Activated CD8-positive, alpha-beta T cell treated with anti-CD3 and anti-CD28 coated beads for 36 hours (primary cell): ENCODE measurements at regions of chr11 and their contacts with region 1.

Region 1: GRCh38 chr11:114262681-114263512 is 33.3 kb upstream of the NNMT start:
- DNase-seq: peak; percentile 14
- ATAC-seq: peak; percentile 65
- H3K4me3 Mint-ChIP-seq: no peak overlapping the region
- H3K27ac Mint-ChIP-seq: no peak overlapping the region
- H3K4me1 Mint-ChIP-seq: no peaks in the 10 kb centered on the region
- H3K27me3 Mint-ChIP-seq: peaks cover 2% of the 10 kb centered on the region
- CTCF ChIP-seq: peak; percentile 48

Region 2: DNA sequence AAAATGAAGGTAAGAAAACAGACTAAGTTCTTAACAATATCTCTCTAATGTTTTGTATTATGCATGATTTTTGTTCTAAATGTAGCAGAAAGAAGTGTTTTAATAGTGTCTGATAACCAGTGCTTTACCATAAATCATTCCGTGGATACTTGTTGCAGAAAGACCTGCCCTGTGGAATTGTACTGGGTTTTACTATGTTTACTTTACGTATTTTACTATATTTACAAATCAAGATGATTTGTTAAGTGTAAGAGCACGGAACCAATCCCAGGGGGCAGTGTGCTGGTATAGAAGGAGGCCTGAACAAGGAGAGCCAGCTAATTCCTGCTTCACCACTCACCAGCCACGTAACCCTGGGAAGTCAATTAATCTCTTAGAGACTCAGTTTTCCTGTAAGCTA is 356.9 kb before region 1 on chr11:
- CTCF ChIA-PET with region 1: interaction called, 15 read pairs
- POLR2A ChIA-PET with region 1: no interaction called
- intact Hi-C with region 1: no loop called
- DNase-seq: no peak
- ATAC-seq: no peak
- H3K4me3 Mint-ChIP-seq: no peak overlapping the region
- H3K27ac Mint-ChIP-seq: no peak overlapping the region
- H3K4me1 Mint-ChIP-seq: no peaks in the 10 kb centered on the region
- H3K27me3 Mint-ChIP-seq: peaks cover 10% of the 10 kb centered on the region
- CTCF ChIP-seq: no peak

Region 3: DNA sequence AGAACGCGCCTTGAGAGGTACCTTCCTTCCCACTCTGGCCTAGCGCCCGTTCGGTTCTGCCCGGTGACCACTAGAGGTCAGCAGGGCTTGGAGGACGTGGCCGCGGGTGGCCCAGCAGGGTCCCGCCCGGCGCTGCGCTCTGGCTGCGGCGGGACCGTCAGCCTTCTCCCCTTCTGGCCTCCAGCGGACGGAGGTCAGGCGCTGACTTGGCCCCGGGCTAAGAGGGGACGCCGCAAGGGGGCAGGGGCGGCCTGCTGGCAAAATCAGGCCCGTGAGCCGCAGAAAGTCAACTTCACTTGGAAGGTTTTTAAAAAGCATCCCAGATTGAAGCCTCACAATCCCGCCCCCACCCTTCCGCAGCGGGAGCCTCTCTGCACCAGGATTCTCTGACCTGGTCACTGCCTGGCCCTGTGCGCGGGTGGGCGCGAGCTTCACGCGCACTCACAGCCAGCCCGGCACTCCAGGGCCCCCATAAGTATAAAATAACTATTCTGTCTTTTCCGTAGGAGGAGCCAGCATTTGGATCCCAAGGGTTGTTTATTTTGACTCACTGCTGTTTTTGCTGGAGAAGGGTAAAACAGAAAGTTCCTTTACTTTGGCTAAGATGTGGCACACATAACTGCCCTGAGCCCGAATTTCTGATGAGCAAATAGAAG is 226.6 kb before region 1 on chr11:
- CTCF ChIA-PET with region 1: interaction called, 210 read pairs
- POLR2A ChIA-PET with region 1: interaction called, 3 read pairs
- intact Hi-C with region 1: loop called (anchors 2 kb)
- DNase-seq: peak; percentile 58
- ATAC-seq: peak; percentile 91
- H3K4me3 Mint-ChIP-seq: no peak overlapping the region
- H3K27ac Mint-ChIP-seq: no peak overlapping the region
- H3K4me1 Mint-ChIP-seq: no peaks in the 10 kb centered on the region
- H3K27me3 Mint-ChIP-seq: no peaks in the 10 kb centered on the region
- CTCF ChIP-seq: peak; percentile 68

Region 4: DNA sequence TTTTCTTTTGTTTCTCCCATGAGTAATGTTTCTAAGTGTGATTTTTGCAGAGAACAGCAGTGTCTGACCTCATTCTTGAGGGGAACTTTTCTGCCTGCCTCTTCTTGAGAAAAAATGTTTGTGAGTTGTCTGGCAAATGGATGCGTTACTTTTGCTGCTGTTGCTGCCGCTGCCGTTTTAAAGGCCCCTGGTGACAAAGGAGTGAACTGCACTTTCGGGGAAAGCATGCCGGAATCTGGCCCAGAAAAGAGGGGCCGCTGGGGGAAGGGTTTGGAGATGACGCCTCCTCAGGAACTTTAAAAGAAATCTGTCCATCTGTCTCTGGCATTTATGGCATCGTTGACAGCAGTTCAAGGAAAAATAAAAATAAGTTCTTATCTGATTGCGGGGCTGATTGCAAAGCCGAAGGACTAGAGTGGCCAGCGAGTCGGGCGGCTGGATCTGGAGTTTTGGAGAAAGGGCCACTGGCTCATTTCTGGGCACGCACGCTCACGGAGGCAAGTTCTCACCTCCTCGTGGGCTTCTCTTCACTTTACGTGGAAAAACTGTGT is 186.9 kb before region 1 on chr11:
- CTCF ChIA-PET with region 1: interaction called, 13 read pairs
- POLR2A ChIA-PET with region 1: no interaction called
- intact Hi-C with region 1: no loop called
- DNase-seq: peak; percentile 54
- ATAC-seq: peak; percentile 22
- H3K4me3 Mint-ChIP-seq: peak overlapping the region; percentile 26
- H3K27ac Mint-ChIP-seq: peak overlapping the region; percentile 37
- H3K4me1 Mint-ChIP-seq: peaks cover 65% of the 10 kb centered on the region
- H3K27me3 Mint-ChIP-seq: no peaks in the 10 kb centered on the region
- CTCF ChIP-seq: peak; percentile 67

Region 5: DNA sequence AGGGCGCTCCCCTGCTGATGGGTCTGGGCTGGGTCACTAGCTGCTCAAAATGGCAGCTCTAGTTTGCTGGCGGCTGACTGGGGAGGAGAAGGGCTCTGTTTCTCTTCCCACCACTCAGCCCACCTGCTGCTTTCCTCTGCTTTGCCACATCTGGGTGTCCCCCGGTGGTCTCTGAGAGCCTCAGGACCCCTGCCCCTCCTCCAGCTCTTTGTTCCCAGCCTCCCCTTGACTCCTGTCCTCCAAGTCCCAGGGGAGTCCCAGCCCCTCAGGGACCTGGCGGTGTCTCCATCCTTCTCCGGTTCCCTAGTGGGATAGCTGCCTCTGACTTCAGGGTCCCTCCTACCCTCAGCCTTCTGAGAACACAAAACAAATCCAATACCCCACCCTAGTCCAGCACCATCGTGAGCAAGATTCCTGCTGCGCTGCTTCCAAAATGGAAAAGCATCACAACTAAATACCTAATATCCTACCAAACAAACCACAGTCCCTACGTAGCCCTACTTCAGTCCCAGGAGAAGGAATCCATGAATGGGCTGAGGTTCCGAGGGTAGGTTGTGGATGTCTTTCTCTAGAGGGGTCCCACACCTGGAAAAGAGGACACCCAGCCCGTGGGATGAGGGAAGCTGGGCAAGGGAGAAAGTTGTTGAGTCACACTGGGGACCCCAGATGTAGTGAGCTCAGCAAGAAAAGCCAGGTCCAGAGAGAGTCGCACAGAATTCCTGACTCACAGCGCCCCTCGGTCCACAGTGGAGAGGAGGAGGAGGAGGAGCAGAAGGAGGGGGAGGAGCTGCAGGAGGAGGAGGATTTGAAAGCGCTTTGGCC is 11.7 kb before region 1 on chr11:
- CTCF ChIA-PET with region 1: interaction called, 57 read pairs
- POLR2A ChIA-PET with region 1: no interaction called
- intact Hi-C with region 1: no loop called
- DNase-seq: no peak
- ATAC-seq: no peak
- H3K4me3 Mint-ChIP-seq: no peak overlapping the region
- H3K27ac Mint-ChIP-seq: no peak overlapping the region
- H3K4me1 Mint-ChIP-seq: no peaks in the 10 kb centered on the region
- H3K27me3 Mint-ChIP-seq: no peaks in the 10 kb centered on the region
- CTCF ChIP-seq: no peak

Region 6: GRCh38 chr11:114439229-114440120 is 176.6 kb after region 1 on chr11 and contains the start of gene REXO2:
- CTCF ChIA-PET with region 1: no interaction called
- POLR2A ChIA-PET with region 1: no interaction called
- intact Hi-C with region 1: no loop called
- DNase-seq: peak; percentile 96
- ATAC-seq: peak; percentile 97
- H3K4me3 Mint-ChIP-seq: peak within 1 kb of the TSS; percentile 96
- H3K27ac Mint-ChIP-seq: peak within 1 kb of the TSS; percentile 93
- H3K4me1 Mint-ChIP-seq: peaks cover 23% of the 10 kb centered on the region
- H3K27me3 Mint-ChIP-seq: no peaks in the 10 kb centered on the region
- CTCF ChIP-seq: no peak
- total RNA-seq, gene REXO2: 61.7 to 64.8 TPM